SK-N-SH (cell line): ENCODE measurements at regions of chr16 and their contacts with region 1.

Region 1: GRCh38 chr16:55323637-55324490 is at the start of gene IRX6:
- DNase-seq: peak; percentile 89
- H3K4me3 ChIP-seq: peak within 1 kb of the TSS; percentile 44 to 58; a peak in 3 of 4 replicates
- H3K27ac ChIP-seq: peak within 1 kb of the TSS in 1 of 2 experiments; percentile 39; a peak in 1 of 4 replicates
- H3K4me1 ChIP-seq: peaks cover 0 to 10% of the 10 kb centered on the region in 2 experiments; a peak in 2 of 4 replicates
- H3K27me3 ChIP-seq: no peaks in the 10 kb centered on the region
- CTCF ChIP-seq: peak; percentile 52
- EP300 ChIP-seq: no peak
- RAD21 ChIP-seq: peak; percentile 53
- polyA plus RNA-seq, gene IRX6: not detected in 2 replicates

Region 2: GRCh38 chr16:55035029-55035428 is 288.8 kb before region 1 on chr16:
- CTCF ChIA-PET with region 1: interaction called, 15 read pairs
- POLR2A ChIA-PET with region 1: interaction called, 3 read pairs
- DNase-seq: peak; percentile 73
- H3K4me3 ChIP-seq: 0 out of 4 replicates have a peak overlapping the region, but pooled peaks of 1 of the 2 experiments have one; percentile 32
- H3K27ac ChIP-seq: no peak overlapping the region
- H3K4me1 ChIP-seq: peaks cover 0 to 5% of the 10 kb centered on the region in 2 experiments; a peak in 2 of 4 replicates
- H3K27me3 ChIP-seq: no peaks in the 10 kb centered on the region
- CTCF ChIP-seq: peak; percentile 52
- EP300 ChIP-seq: no peak
- RAD21 ChIP-seq: peak; percentile 68

Region 3: DNA sequence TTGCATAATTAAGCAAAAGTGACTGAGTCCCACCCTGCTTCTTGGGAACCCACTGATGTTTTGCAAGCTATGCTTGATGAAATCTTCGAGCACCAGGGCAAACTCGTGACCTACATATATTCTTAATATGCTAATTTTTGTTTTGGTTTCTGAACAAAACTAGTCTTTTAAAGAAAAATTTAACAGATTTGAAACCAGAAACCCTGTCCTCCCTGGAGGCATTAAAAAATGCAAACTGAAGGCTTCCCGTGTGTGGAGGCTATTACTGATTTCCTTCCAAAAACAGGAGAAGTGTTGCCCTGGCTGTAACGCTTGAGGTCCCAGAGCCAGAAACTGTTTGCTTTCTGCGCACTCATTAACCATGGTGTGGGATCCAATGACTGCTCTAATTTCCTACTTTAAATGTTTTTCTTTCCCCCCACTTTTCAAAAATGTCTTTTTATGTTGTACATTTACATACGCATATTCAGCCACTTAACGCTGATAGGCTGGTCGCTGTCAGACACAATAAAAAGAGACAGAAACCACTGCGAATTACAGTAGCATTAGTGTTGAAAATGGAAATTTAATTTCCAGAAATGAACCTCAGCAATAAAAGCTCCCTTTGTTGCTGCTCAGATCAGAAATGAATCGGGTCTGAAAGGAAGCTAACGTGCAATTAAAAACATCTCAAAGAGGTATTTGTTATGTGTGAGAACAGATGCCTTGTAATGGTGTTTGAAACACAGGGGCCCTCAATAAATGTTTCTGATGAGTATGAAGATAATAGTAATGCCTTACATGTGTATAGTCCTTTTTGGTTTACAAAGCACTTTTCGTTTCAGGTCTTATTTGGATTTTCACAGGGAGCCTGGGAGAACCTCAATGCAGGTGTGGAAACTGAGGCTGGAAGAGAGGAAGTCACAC is 39.8 kb before region 1 on chr16:
- CTCF ChIA-PET with region 1: interaction called, 10 read pairs
- POLR2A ChIA-PET with region 1: no interaction called
- DNase-seq: peak; percentile 46
- H3K4me3 ChIP-seq: no peak overlapping the region; a peak in 1 of 4 replicates
- H3K27ac ChIP-seq: peak overlapping the region in 1 of 2 experiments; percentile 99; a peak in 2 of 4 replicates
- H3K4me1 ChIP-seq: peaks cover 0 to 45% of the 10 kb centered on the region in 2 experiments; a peak in 2 of 4 replicates
- H3K27me3 ChIP-seq: no peaks in the 10 kb centered on the region
- CTCF ChIP-seq: no peak
- EP300 ChIP-seq: peak in 1 of 2 experiments; percentile 88; a peak in 2 of 4 replicates
- RAD21 ChIP-seq: peak; percentile 24

Region 4: DNA sequence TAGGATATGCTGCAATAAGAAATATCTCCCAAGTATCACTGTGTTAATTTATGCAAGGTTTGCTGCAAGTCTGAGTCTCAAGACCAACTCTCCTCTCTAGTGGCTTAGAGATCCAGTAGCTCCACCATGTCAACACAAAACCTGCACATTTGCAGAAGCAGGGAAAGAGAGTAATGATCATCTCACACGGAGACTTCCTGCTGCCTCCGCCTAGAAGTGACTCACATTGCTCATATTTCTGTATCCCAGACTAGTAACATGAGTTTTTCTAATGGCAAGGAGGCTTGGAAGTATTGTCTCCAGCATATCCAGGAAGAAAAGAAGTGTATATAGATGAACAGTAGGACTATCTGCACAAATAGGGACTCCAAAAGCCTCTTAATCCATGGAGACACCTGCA is 14.9 kb before region 1 on chr16:
- CTCF ChIA-PET with region 1: interaction called, 19 read pairs
- POLR2A ChIA-PET with region 1: no interaction called
- DNase-seq: no peak
- H3K4me3 ChIP-seq: no peak overlapping the region
- H3K27ac ChIP-seq: no peak overlapping the region
- H3K4me1 ChIP-seq: no peaks in the 10 kb centered on the region
- H3K27me3 ChIP-seq: no peaks in the 10 kb centered on the region
- CTCF ChIP-seq: no peak
- EP300 ChIP-seq: no peak
- RAD21 ChIP-seq: no peak

Region 5: GRCh38 chr16:55453909-55454308 is 130.0 kb after region 1 on chr16:
- CTCF ChIA-PET with region 1: no interaction called
- POLR2A ChIA-PET with region 1: no interaction called
- DNase-seq: no peak
- H3K4me3 ChIP-seq: no peak overlapping the region
- H3K27ac ChIP-seq: no peak overlapping the region
- H3K4me1 ChIP-seq: no peaks in the 10 kb centered on the region
- H3K27me3 ChIP-seq: no peaks in the 10 kb centered on the region
- CTCF ChIP-seq: no peak
- EP300 ChIP-seq: no peak
- RAD21 ChIP-seq: no peak